Stomach (tissue), 19 donors: ENCODE measurements at regions of chr17 and their contacts with region 1.

Region 1: DNA sequence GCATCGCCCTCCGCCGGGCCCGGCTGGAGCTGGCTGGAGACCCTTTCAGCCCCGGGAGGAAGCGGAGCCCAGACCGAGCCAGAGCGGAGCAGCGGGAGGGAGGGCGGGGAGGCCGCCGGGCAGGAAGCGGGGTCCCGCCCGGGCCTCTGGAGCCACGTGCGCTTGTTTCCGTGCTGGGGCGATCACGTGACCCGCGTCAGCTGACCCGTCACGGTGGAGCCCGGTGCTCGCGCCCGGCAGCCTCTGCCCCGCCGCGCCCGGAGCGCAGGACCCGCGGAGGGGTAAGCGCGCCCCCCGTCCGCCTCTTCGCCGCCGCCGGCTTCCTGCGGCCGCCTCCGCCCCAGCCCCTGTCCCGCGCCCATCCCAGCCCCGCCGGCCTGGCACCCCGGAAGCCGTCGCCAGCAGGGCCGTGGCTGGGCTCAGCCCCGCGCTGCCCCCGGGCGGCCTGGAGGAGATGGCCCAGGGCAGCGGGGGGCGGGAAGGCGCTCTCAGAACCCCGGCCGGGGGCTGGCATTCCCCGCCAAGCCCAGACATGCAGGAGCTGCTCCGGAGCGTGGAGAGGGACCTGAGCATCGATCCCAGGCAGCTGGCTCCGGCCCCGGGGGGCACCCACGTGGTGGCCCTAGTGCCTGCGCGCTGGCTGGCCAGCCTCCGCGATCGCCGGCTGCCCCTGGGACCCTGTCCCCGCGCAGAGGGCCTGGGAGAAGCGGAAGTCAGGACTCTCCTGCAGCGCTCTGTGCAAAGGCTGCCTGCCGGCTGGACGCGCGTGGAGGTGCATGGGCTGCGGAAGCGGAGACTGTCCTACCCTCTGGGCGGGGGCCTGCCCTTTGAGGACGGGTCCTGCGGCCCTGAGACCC is at the start of gene WDR81:
- DNase-seq: peak; percentile 93 to 97
- H3K4me3 ChIP-seq: peak within 1 kb of the TSS; percentile 67 to 100 (median 90)
- H3K27ac ChIP-seq: peak within 1 kb of the TSS; percentile 79 to 90 (median 84)
- H3K4me1 ChIP-seq: peaks cover 33 to 77% (median 67%) of the 10 kb centered on the region in 4 donors
- H3K27me3 ChIP-seq: no peaks in the 10 kb centered on the region
- CTCF ChIP-seq: no peak
- EP300 ChIP-seq: no peak
- POLR2A ChIP-seq: no peak
- total RNA-seq, gene WDR81: 13.4 to 56.5 (median 14.0) TPM

Region 2: DNA sequence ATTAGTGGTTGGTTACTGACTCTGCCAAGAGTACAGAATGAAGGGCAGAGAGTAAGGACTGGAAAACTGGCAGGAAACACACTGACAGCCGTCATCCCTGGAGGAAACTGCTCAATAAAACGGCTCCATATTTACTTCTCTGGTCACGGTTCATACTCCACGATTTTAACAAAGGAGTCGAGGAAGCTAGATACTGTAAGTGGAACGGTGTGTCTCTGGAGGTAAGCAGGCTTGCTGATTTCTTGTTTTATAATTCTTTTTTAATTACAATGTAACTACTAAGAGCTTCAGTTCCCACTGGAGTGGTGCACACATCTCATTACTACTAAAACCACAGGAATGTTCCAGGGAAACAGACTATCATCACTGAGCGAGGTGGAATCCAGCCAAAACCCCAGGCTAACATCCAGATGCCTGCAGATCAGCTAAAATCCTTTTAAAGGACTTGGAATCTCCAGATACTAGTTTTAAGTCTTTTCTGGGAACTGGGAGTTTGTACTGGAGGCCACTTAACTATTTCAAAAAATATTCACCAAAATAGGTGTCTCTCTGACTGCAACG is 54.9 kb after region 1 on chr17:
- intact Hi-C with region 1: loop called (anchors 10 kb)
- DNase-seq: peak; percentile 61 to 87
- H3K4me3 ChIP-seq: no peak overlapping the region
- H3K27ac ChIP-seq: peak overlapping the region; percentile 22 to 95 (median 89)
- H3K4me1 ChIP-seq: peaks cover 9 to 43% (median 25%) of the 10 kb centered on the region in 4 donors
- H3K27me3 ChIP-seq: no peaks in the 10 kb centered on the region
- CTCF ChIP-seq: no peak
- EP300 ChIP-seq: no peak
- POLR2A ChIP-seq: no peak

Region 3: GRCh38 chr17:1939981-1940809 is 215.5 kb after region 1 on chr17:
- intact Hi-C with region 1: no loop called
- DNase-seq: peak in 1 of 2 donors; percentile 70
- H3K4me3 ChIP-seq: no peak overlapping the region
- H3K27ac ChIP-seq: no peak overlapping the region
- H3K4me1 ChIP-seq: no peaks in the 10 kb centered on the region
- H3K27me3 ChIP-seq: peaks cover 0 to 13% (median 0%) of the 10 kb centered on the region in 3 donors
- CTCF ChIP-seq: no peak
- EP300 ChIP-seq: no peak
- POLR2A ChIP-seq: no peak

Region 4: GRCh38 chr17:1989135-1989534 is 264.4 kb after region 1 on chr17:
- intact Hi-C with region 1: no loop called
- DNase-seq: no peak
- H3K4me3 ChIP-seq: no peak overlapping the region
- H3K27ac ChIP-seq: no peak overlapping the region
- H3K4me1 ChIP-seq: peaks cover 0 to 7% (median 0%) of the 10 kb centered on the region in 4 donors
- H3K27me3 ChIP-seq: peaks cover 0 to 6% (median 0%) of the 10 kb centered on the region in 3 donors
- CTCF ChIP-seq: no peak
- EP300 ChIP-seq: no peak
- POLR2A ChIP-seq: no peak